ENCODE measurements at regions of chr2 and their contacts with region 1.

Region 1: GRCh38 chr2:96960153-96960961 is 26.0 kb downstream of the FAM178B start:
- DNase-seq: peak; percentile 89
- H3K4me3 Mint-ChIP-seq: no peak overlapping the region
- H3K27ac Mint-ChIP-seq: no peak overlapping the region
- H3K4me1 Mint-ChIP-seq: peaks cover 50% of the 10 kb centered on the region
- H3K27me3 Mint-ChIP-seq: no peaks in the 10 kb centered on the region

Region 2: GRCh38 chr2:96565111-96565510 is 395.2 kb before region 1 on chr2:
- CTCF ChIA-PET with region 1: no interaction called
- POLR2A ChIA-PET with region 1: no interaction called
- intact Hi-C with region 1: no loop called
- DNase-seq: no peak
- H3K4me3 Mint-ChIP-seq: no peak overlapping the region
- H3K27ac Mint-ChIP-seq: no peak overlapping the region
- H3K4me1 Mint-ChIP-seq: no peaks in the 10 kb centered on the region
- H3K27me3 Mint-ChIP-seq: no peaks in the 10 kb centered on the region

Region 3: DNA sequence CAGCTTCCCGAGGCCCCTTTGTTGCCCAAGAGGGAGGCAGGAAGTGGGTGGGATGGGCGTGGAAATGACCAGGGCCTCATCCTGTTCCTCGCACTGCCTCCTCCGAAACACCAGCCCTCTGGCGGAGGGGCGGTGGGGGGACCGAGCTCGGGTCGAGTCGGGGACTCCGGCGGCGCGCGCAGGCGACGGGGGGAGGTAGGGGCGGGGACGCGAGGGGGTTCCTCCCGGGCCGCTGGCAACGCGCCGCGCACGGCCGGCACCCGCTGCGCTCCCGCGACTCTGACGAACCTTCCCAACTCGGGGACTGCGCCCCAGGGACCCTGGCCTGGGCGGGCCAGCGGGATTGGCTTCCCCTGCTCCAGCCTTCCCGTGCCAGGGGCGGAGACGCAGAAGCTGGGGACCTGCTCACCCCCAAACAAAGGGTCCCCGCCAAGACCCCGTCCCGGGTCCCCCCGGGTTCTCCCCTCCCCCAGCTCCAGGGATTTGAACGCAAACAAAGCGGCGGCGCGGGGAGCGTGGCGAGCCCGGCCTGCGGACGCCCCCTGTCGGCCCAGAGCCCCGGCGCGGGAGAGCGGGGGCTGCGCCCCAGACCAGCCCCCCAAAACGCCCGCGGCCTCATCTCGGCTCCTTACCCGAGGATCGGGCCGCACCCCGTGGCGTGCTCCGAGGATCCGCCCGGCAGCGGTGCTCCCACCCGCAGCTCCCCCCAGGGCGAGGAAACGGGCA is 91.6 kb before region 1 on chr2:
- CTCF ChIA-PET with region 1: interaction called, 192 read pairs
- POLR2A ChIA-PET with region 1: no interaction called
- intact Hi-C with region 1: loop called (anchors 2 kb)
- DNase-seq: peak; percentile 81
- H3K4me3 Mint-ChIP-seq: peak overlapping the region; percentile 79
- H3K27ac Mint-ChIP-seq: peak overlapping the region; percentile 76
- H3K4me1 Mint-ChIP-seq: peaks cover 35% of the 10 kb centered on the region
- H3K27me3 Mint-ChIP-seq: peaks cover 2% of the 10 kb centered on the region

Region 4: GRCh38 chr2:96913398-96914202 is 46.8 kb before region 1 on chr2:
- CTCF ChIA-PET with region 1: no interaction called
- POLR2A ChIA-PET with region 1: no interaction called
- intact Hi-C with region 1: loop called (anchors 5 kb)
- DNase-seq: peak; percentile 72
- H3K4me3 Mint-ChIP-seq: peak overlapping the region; percentile 56
- H3K27ac Mint-ChIP-seq: peak overlapping the region; percentile 73
- H3K4me1 Mint-ChIP-seq: peaks cover 51% of the 10 kb centered on the region
- H3K27me3 Mint-ChIP-seq: no peaks in the 10 kb centered on the region

Region 5: GRCh38 chr2:96977631-96978195 is 17.4 kb after region 1 on chr2:
- CTCF ChIA-PET with region 1: interaction called, 3 read pairs
- POLR2A ChIA-PET with region 1: no interaction called
- intact Hi-C with region 1: loop called (anchors 2 kb)
- DNase-seq: peak; percentile 52
- H3K4me3 Mint-ChIP-seq: peak overlapping the region; percentile 28
- H3K27ac Mint-ChIP-seq: peak overlapping the region; percentile 34
- H3K4me1 Mint-ChIP-seq: peaks cover 19% of the 10 kb centered on the region
- H3K27me3 Mint-ChIP-seq: no peaks in the 10 kb centered on the region

Measured in activated CD4-positive, alpha-beta memory T cell treated with anti-CD3 and anti-CD28 coated beads for 36 hours (primary cell).